ENCODE measurements at regions of chr3 and their contacts with region 1.

Region 1: DNA sequence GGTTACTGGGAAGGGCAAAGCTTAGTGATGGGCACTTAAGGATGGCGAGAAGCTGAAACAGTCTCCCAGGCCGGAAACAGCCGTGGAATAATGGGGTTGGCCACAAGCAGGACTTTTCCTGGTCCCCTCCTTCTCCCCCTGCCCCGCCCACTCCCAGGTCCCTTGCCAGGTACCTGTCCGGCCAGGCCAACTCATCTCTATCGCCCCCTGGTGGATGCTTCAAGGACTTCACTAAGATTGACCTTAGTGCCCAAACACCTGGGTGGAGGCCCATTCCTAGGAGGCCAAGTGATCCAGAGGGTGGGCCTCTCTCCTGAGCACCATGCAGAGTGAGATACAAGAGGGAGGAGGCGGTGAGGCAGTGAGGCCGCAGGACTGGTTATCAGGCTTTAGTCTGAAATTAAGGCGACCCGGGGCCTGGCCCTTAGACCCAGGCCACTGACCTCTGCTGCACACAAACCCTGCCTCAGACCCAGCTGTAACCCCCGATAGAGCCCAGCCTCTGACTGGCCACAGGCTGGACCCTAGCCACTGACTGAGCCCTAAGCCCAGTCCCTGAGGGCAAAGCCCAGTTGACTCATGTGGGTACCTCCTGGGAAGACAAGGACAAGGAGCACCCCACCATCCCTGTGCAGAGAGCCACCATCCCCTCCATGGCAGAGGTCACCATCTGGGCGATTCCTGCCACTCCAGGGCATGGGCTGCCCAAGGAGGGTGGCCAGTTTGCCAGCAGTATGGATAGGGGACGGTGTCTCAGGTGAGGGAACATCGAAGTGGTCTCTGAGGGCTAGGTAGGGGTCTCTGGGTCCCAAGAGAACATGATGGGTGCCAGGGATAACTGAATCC is 37.6 kb downstream of the VIPR1 start:
- DNase-seq: peak; percentile 70
- H3K4me3 Mint-ChIP-seq: no peak overlapping the region
- H3K27ac Mint-ChIP-seq: no peak overlapping the region
- H3K4me1 Mint-ChIP-seq: no peaks in the 10 kb centered on the region
- H3K27me3 Mint-ChIP-seq: no peaks in the 10 kb centered on the region
- CTCF ChIP-seq: peak; percentile 87

Region 2: DNA sequence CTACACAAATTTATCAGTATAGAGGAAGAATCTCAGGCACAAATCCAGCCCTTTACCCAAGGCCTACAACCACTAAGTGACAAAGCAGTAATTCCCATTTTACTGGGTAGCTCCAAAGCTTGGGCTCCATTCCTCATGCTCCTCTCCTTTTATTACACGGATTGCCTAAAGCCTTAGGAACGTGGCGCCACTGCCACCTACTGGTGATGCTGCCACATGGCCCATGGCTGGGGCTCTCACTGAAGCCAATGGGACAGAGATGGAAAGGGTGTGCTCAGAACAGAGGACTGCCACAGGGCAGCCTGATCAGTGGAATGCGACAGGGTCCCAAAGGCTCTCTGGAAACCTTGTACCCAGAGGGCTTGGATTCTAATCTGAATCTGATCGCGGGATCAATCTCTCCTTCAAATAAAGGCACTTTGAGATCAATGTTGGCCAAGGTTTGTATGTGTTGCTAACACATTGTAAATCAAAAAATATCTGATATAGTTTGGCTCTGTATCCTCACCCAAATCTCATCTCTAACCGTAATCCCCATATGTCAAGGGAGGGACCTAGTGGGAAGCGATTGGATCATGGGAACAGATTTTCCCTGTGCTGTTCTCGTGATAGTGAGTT is 96.2 kb before region 1 on chr3:
- CTCF ChIA-PET with region 1: interaction called, 3 read pairs
- POLR2A ChIA-PET with region 1: no interaction called
- intact Hi-C with region 1: loop called (anchors 2 kb)
- DNase-seq: peak; percentile 83
- H3K4me3 Mint-ChIP-seq: no peak overlapping the region
- H3K27ac Mint-ChIP-seq: no peak overlapping the region
- H3K4me1 Mint-ChIP-seq: no peaks in the 10 kb centered on the region
- H3K27me3 Mint-ChIP-seq: peaks cover 11% of the 10 kb centered on the region
- CTCF ChIP-seq: peak; percentile 97

Measured in MCF 10A (cell line).